Right cardiac atrium (tissue), 5 donors: ENCODE measurements at regions of chr9 and their contacts with region 1.

Region 1: GRCh38 chr9:97598461-97599288 is 34.5 kb downstream of the TSTD2 start:
- DNase-seq: peak; percentile 75 to 83 (median 80)
- ATAC-seq: peak; percentile 65 to 80
- H3K4me3 ChIP-seq: no peak overlapping the region
- H3K27ac ChIP-seq: peak overlapping the region; percentile 31
- H3K4me1 ChIP-seq: peaks cover 12% of the 10 kb centered on the region
- H3K27me3 ChIP-seq: no peaks in the 10 kb centered on the region

Region 2: DNA sequence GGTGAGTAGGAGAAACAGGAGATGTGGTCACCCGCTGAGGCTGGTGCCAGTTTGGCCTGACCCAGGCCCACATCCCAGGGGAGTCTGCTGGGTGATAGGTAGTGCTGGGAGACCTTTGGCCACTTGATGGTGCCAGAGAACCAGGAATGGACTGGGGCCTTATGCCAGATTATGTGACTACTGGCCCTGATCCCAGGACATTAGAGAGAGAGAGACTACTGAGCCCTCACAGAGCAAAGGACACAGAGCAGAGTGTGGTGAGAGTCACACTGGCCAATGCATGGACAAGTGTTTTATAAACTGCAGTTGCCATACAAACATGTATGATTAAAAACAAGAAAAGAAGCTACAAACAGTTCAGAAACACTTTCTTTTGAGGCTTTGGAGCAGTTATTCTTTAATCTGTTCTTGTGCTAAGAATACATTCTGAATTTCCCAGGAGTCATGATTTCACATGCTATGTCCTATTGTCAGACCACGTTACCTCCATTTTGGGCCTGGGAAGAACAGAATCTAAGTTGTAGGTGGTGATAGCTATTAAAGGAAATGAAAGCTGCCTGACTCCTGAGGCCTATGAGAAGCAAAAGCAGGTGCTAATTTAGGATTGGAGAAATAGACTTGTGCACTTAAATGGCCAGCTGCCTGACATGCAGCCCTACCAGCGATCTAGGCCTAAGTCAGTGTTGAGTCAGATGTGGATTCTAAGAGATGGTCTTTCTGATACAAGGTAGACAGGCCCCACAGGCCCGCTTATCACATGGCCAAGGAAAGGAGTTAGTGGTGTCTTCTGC is 129.8 kb before region 1 on chr9:
- intact Hi-C with region 1: loop called in 2 of 4 experiments (anchors 5 kb)
- DNase-seq: peak; percentile 79 to 88 (median 85)
- ATAC-seq: peak; percentile 95 to 96
- H3K4me3 ChIP-seq: no peak overlapping the region
- H3K27ac ChIP-seq: peak overlapping the region; percentile 25
- H3K4me1 ChIP-seq: no peaks in the 10 kb centered on the region
- H3K27me3 ChIP-seq: no peaks in the 10 kb centered on the region

Region 3: DNA sequence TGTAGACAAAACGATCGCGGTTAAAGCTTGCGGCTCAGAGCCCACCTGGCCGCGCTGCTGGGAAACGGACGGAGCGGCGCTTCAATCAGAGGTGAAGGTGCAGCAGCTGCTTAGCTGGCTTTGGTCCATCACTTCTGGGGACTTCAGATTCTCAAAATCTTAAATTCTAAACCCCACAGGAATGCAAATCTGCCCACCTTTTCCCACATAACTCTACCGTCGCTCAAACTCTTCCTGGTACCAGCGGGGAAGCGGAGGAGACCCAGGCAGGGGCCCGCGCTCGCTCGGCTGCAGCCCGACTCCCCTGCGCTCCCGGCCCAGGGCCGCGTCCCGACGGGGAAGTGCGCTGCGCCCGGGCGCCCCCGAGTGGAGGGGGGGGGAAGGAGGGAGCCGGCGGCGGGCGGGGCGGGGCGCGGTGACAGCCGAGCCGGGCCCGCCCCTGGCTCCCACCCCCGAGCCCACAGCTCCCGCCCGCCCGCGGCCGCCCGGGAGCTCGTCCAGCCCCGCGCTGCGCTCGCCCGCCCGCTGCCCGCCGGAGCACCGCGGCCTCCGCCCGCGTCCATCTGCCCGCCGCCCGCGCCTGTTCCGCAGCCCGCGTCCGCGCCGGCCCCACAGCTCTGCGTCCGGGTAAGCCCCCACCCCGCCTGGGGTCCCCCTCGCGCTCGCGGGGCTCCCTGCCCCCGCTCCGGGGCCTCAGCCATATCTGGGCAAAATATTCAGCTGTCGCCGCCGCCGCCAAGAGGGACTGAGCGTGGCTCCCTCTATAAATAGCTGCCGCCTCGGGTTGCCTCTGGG is 97.3 kb before region 1 on chr9 and contains the start of gene TMOD1:
- intact Hi-C with region 1: loop called in 3 of 4 experiments (anchors 10 kb)
- DNase-seq: peak; percentile 77 to 93 (median 91)
- ATAC-seq: peak; percentile 76 to 84
- H3K4me3 ChIP-seq: peak within 1 kb of the TSS; percentile 91
- H3K27ac ChIP-seq: peak within 1 kb of the TSS; percentile 87
- H3K4me1 ChIP-seq: peaks cover 16% of the 10 kb centered on the region
- H3K27me3 ChIP-seq: no peaks in the 10 kb centered on the region
- total RNA-seq, gene TMOD1: 177 to 220 (median 208) TPM

Region 4: GRCh38 chr9:97559111-97559514 is 39.6 kb before region 1 on chr9:
- intact Hi-C with region 1: no loop called
- DNase-seq: peak in 1 of 3 donors; percentile 48
- ATAC-seq: no peak
- H3K4me3 ChIP-seq: no peak overlapping the region
- H3K27ac ChIP-seq: peak overlapping the region; percentile 90
- H3K4me1 ChIP-seq: peaks cover 42% of the 10 kb centered on the region
- H3K27me3 ChIP-seq: no peaks in the 10 kb centered on the region